ENCODE measurements at regions of chr6 and their contacts with region 1.

Region 1: GRCh38 chr6:117829594-117830319 is 77.3 kb upstream of the SLC35F1 start:
- DNase-seq: no peak
- ATAC-seq: peak; percentile 57
- H3K4me3 ChIP-seq: no peak overlapping the region
- H3K27ac ChIP-seq: no peak overlapping the region
- H3K4me1 ChIP-seq: no peaks in the 10 kb centered on the region
- H3K27me3 ChIP-seq: no peaks in the 10 kb centered on the region
- CTCF ChIP-seq: peak; percentile 43 to 56 (median 45); a peak in 5 of 6 replicates
- EP300 ChIP-seq: no peak
- POLR2A ChIP-seq: no peak
- RAD21 ChIP-seq: peak; percentile 72

Region 2: GRCh38 chr6:117143647-117144046 is 686.1 kb before region 1 on chr6:
- CTCF ChIA-PET with region 1: no interaction called
- POLR2A ChIA-PET with region 1: no interaction called
- RAD21 ChIA-PET with region 1: no interaction called
- SMC1A ChIA-PET with region 1: no interaction called
- in situ Hi-C with region 1: no loop called
- intact Hi-C with region 1: no loop called
- DNase-seq: no peak
- ATAC-seq: no peak
- H3K4me3 ChIP-seq: no peak overlapping the region
- H3K27ac ChIP-seq: no peak overlapping the region
- H3K4me1 ChIP-seq: no peaks in the 10 kb centered on the region
- H3K27me3 ChIP-seq: no peaks in the 10 kb centered on the region
- CTCF ChIP-seq: no peak
- EP300 ChIP-seq: no peak
- POLR2A ChIP-seq: no peak
- RAD21 ChIP-seq: no peak

Region 3: GRCh38 chr6:117346142-117346930 is 483.4 kb before region 1 on chr6:
- CTCF ChIA-PET with region 1: no interaction called
- POLR2A ChIA-PET with region 1: no interaction called
- RAD21 ChIA-PET with region 1: no interaction called
- SMC1A ChIA-PET with region 1: no interaction called
- in situ Hi-C with region 1: loop called (anchors 5 kb)
- intact Hi-C with region 1: loop called (anchors 5 kb)
- DNase-seq: no peak
- ATAC-seq: peak; percentile 63
- H3K4me3 ChIP-seq: no peak overlapping the region
- H3K27ac ChIP-seq: no peak overlapping the region
- H3K4me1 ChIP-seq: no peaks in the 10 kb centered on the region
- H3K27me3 ChIP-seq: no peaks in the 10 kb centered on the region; a peak in 1 of 4 replicates
- CTCF ChIP-seq: peak in 2 of 3 experiments; percentile 29 to 35; a peak in 3 of 6 replicates
- EP300 ChIP-seq: no peak
- POLR2A ChIP-seq: no peak
- RAD21 ChIP-seq: 0 out of 2 replicates have a peak, but pooled peaks have one; percentile 14

Region 4: DNA sequence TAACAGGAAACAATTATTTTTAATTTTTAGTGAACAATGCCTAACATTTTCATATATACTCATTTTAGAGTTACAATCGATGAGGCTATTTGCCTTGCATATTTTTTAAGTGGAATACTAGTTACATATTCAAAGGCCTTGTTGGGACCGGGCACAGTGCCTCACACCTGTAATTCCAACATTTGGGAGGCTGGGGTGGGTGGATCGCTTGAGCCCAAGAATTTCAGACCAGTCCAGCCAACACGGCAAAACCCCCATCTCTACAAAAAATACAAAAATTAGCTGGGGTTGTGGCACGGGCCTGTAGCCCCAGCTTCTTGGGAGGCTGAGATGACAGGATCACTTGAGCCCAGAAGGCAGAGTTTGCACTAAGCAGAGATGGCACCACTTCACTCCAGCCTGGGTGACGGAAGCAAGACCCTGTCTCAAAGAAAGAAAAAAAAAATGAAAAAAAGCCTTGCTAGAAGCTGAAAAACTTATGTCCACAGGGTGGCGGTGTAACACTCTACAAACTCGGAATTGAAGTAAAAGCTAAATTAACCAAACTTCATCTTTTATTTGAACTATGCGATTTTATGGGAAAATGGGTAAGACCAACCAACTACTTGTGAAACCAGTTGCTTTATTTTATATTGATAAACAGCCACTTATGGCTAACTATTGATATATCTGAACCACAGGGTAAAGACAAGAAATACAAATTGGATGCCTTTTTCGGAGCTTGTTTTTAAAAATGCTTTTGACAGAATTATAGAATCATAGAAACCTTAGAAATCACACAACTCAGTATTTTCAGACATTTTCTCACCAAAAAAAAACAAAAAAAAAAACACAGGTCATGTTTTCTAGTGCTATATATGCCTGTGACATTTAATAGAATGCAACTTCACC is 380.0 kb before region 1 on chr6:
- CTCF ChIA-PET with region 1: interaction called, 12 read pairs
- POLR2A ChIA-PET with region 1: no interaction called
- RAD21 ChIA-PET with region 1: interaction called, 8 read pairs
- SMC1A ChIA-PET with region 1: interaction called, 4 read pairs
- in situ Hi-C with region 1: loop called (anchors 10 kb)
- intact Hi-C with region 1: loop called (anchors 2 kb)
- DNase-seq: peak; percentile 12
- ATAC-seq: peak; percentile 62
- H3K4me3 ChIP-seq: no peak overlapping the region
- H3K27ac ChIP-seq: no peak overlapping the region
- H3K4me1 ChIP-seq: no peaks in the 10 kb centered on the region
- H3K27me3 ChIP-seq: no peaks in the 10 kb centered on the region
- CTCF ChIP-seq: peak; percentile 59 to 68 (median 59); a peak in 5 of 6 replicates
- EP300 ChIP-seq: no peak
- POLR2A ChIP-seq: no peak
- RAD21 ChIP-seq: peak; percentile 86

Region 5: DNA sequence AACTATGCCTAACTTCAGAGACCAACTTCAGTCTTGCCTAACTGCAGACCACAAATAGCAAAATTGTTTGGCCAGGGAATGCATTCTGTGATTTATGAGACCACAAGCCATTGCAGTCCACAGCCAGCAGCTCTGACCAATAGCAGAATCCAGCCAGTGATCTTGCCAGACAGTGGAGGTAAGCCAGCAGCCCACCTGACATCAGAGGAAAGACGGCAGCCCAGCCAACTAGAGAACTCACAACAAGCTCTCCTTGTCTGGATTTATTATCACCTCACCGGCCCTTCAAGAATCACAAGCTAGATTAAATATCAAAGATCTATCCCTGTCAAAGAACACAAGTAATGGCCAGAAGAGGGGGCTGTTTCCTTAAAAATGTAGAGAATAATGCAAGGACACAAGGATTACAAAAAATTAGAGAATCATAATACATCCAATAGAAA is 10.8 kb after region 1 on chr6:
- CTCF ChIA-PET with region 1: interaction called, 11 read pairs
- POLR2A ChIA-PET with region 1: no interaction called
- RAD21 ChIA-PET with region 1: no interaction called
- SMC1A ChIA-PET with region 1: no interaction called
- in situ Hi-C with region 1: no loop called
- intact Hi-C with region 1: no loop called
- DNase-seq: no peak
- ATAC-seq: peak; percentile 70
- H3K4me3 ChIP-seq: no peak overlapping the region
- H3K27ac ChIP-seq: no peak overlapping the region
- H3K4me1 ChIP-seq: no peaks in the 10 kb centered on the region
- H3K27me3 ChIP-seq: no peaks in the 10 kb centered on the region
- CTCF ChIP-seq: peak; percentile 37 to 49 (median 41); a peak in 3 of 6 replicates
- EP300 ChIP-seq: no peak
- POLR2A ChIP-seq: no peak
- RAD21 ChIP-seq: peak; percentile 65